ENCODE measurements at regions of chr4 and their contacts with region 1.

Region 1: DNA sequence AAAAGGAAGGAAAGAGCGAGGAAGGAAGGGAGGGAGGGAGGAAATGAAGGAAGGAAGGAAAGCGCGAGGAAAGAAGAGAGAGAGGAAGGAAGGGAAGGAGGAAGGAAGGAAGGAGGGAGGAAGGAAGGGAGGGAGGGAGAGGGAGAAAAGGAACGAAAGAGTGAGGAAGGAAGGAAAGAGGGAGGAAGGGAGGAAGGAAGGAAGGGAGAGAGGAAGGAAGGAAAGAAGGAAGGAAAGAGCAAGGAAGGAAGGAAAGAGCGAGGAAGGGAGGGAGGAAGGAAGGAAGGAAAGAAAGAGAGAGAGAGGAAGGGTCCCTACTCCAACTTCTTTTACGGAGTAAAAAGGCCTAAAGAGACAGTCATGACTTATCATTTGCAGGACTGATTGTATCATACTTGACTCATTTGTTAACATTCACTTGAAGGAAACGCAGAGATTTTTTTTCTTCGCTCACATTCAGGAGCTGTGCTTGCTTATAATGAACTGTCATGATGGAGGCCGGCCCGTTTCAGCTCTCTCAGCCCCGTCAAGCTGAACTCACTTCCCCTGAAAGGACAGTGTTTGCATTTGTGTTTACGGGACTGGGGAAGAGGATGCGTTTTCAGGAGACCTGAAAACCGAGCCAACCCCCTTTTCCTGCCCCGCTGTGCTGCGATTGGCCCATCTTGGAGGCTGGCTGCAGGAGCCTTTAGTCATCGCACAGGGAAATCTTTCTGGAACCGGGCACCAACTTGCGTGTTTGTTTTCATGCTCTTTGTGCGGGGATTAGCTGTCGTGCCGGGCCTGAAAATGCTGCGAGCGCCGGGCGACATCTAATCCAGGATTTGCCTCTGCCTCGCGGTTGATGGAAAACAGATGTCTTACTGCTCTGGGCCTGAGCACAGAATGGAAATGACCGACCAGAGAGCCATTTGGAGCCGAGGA is 17.8 kb downstream of the TRIM2 start:
- DNase-seq: peak in 24 of 35 experiments; percentile 1 to 46 (median 10)
- ATAC-seq: peak; percentile 46 to 75 (median 62)
- H3K4me3 ChIP-seq: peak overlapping the region; percentile 54 to 84
- H3K4me3 Mint-ChIP-seq: peak overlapping the region; percentile 85 to 94 (median 89)
- H3K27ac ChIP-seq: no peak overlapping the region
- H3K27ac Mint-ChIP-seq: peak overlapping the region; percentile 82 to 85
- H3K4me1 ChIP-seq: peaks cover 7 to 20% of the 10 kb centered on the region in 2 experiments
- H3K4me1 Mint-ChIP-seq: peaks cover 34 to 45% (median 42%) of the 10 kb centered on the region in 3 donors
- H3K27me3 ChIP-seq: peaks cover 0 to 7% of the 10 kb centered on the region in 2 experiments
- H3K27me3 Mint-ChIP-seq: peaks cover 0 to 2% of the 10 kb centered on the region in 2 donors

Region 2: DNA sequence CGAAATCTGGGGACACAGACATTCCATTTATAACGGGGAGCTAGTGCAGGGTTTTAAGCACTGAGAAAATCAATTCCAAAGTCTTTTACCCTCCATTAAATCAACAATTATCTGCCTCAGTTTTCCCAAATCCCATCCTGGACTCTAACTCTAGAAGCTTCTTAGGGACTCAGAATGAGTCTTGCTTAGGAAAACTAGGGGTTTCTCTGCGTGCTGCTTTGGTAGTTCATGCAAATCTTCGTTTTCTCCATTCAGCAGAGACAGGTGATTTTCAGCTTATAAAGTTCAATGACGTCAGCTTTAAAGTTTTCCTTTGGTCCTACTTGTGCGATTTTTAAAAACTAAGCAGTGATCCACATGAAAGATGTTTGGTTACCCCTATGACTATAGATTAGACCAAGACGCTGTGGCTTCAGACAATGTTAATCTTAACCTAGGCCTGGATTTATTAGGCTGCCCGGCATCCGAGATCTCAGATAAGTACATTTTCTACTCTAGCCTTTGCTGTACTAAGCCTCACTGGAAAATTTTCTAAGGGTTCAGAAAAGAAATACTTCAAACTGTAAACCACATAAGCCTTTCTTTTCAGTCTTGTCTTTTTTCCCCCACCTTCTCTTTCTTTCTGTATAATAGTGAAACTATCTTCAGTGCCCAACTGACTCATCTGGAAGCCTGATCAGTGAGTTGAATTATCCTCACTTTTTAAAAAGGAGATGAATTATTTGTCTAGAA is 1339.8 kb before region 1 on chr4:
- CTCF ChIA-PET with region 1: no interaction called
- POLR2A ChIA-PET with region 1: no interaction called
- DNase-seq: peak in 1 of 35 experiments; percentile 7
- ATAC-seq: no peak
- H3K4me3 ChIP-seq: no peak overlapping the region
- H3K4me3 Mint-ChIP-seq: peak overlapping the region in 2 of 3 donors; percentile 15 to 29
- H3K27ac ChIP-seq: no peak overlapping the region
- H3K27ac Mint-ChIP-seq: peak overlapping the region; percentile 73 to 82
- H3K4me1 ChIP-seq: peaks cover 0 to 3% of the 10 kb centered on the region in 2 experiments
- H3K4me1 Mint-ChIP-seq: peaks cover 8 to 25% (median 24%) of the 10 kb centered on the region in 3 donors
- H3K27me3 ChIP-seq: no peaks in the 10 kb centered on the region
- H3K27me3 Mint-ChIP-seq: no peaks in the 10 kb centered on the region

Region 3: GRCh38 chr4:153166716-153167501 is 55.1 kb before region 1 on chr4:
- CTCF ChIA-PET with region 1: no interaction called
- POLR2A ChIA-PET with region 1: interaction called in 1 of 2 experiments, 10 read pairs
- DNase-seq: no peak
- ATAC-seq: no peak
- H3K4me3 ChIP-seq: no peak overlapping the region
- H3K4me3 Mint-ChIP-seq: no peak overlapping the region
- H3K27ac ChIP-seq: no peak overlapping the region
- H3K27ac Mint-ChIP-seq: no peak overlapping the region
- H3K4me1 ChIP-seq: no peaks in the 10 kb centered on the region
- H3K4me1 Mint-ChIP-seq: no peaks in the 10 kb centered on the region
- H3K27me3 ChIP-seq: no peaks in the 10 kb centered on the region
- H3K27me3 Mint-ChIP-seq: peaks cover 14 to 21% of the 10 kb centered on the region in 2 donors

Measured in T-cell (primary cell).